Transverse colon (tissue), 4 donors: ENCODE measurements at regions of chr5 and their contacts with region 1.

Region 1: GRCh38 chr5:83430130-83431010 is 41.2 kb upstream of the VCAN start:
- DNase-seq: peak; percentile 53
- H3K4me3 ChIP-seq: no peak overlapping the region
- H3K27ac ChIP-seq: no peak overlapping the region
- H3K4me1 ChIP-seq: no peaks in the 10 kb centered on the region
- H3K27me3 ChIP-seq: no peaks in the 10 kb centered on the region
- CTCF ChIP-seq: peak; percentile 68 to 79 (median 73)
- EP300 ChIP-seq: no peak
- POLR2A ChIP-seq: no peak

Region 2: GRCh38 chr5:82351754-82352145 is 1078.6 kb before region 1 on chr5:
- in situ Hi-C with region 1: loop called in 3 of 4 experiments (anchors 5 to 25 kb)
- intact Hi-C with region 1: no loop called
- DNase-seq: no peak
- H3K4me3 ChIP-seq: no peak overlapping the region
- H3K27ac ChIP-seq: peak overlapping the region in 1 of 4 donors; percentile 10
- H3K4me1 ChIP-seq: no peaks in the 10 kb centered on the region
- H3K27me3 ChIP-seq: no peaks in the 10 kb centered on the region
- CTCF ChIP-seq: peak; percentile 70 to 85 (median 77)
- EP300 ChIP-seq: no peak
- POLR2A ChIP-seq: no peak

Region 3: DNA sequence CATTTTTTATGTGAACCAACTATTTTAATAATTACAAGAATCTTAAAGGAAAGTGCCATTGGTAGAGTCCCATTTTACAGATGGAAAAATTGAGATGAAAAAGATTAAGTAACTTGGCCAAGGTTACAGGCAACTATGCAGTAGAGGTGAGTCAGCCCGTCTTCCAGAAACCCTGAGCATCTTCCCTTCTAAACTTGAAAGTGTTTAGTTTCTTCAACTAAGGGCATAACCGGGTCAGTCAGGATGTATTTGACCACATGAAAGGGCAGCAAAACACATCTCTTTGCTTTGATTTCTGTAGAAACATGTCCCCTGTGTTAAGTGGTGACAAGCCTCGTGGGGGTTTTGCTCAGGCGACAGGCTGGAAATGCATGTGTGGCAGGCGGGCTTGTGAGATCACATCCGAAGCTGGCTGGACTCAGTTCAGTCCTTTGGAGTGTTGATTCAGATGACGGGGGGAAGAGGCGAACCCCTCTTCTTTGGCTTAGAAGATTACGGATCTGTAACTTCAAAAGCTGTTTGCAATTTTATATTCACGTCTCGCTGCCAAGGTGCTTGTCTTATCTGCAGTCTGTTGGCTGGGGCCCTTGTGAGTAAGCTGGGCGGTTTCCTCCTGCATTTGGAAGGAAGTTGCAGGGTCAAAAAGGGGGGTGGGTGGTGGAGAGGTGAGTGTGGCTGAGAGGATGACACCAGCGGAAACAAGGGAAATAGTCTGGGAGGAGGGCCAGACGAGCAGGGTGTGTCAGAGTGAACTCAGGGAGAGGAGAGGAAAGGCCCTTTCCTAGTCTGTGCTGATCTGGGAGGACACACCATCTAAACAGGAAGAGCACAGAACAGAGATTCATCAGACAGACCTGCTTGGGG is 1073.3 kb before region 1 on chr5:
- in situ Hi-C with region 1: loop called in 3 of 4 experiments (anchors 5 to 25 kb)
- intact Hi-C with region 1: no loop called
- DNase-seq: peak; percentile 64
- H3K4me3 ChIP-seq: no peak overlapping the region
- H3K27ac ChIP-seq: peak overlapping the region in 2 of 4 donors; percentile 23 to 34
- H3K4me1 ChIP-seq: peaks cover 0 to 11% (median 5%) of the 10 kb centered on the region in 4 donors
- H3K27me3 ChIP-seq: no peaks in the 10 kb centered on the region
- CTCF ChIP-seq: no peak
- EP300 ChIP-seq: no peak
- POLR2A ChIP-seq: no peak

Region 4: DNA sequence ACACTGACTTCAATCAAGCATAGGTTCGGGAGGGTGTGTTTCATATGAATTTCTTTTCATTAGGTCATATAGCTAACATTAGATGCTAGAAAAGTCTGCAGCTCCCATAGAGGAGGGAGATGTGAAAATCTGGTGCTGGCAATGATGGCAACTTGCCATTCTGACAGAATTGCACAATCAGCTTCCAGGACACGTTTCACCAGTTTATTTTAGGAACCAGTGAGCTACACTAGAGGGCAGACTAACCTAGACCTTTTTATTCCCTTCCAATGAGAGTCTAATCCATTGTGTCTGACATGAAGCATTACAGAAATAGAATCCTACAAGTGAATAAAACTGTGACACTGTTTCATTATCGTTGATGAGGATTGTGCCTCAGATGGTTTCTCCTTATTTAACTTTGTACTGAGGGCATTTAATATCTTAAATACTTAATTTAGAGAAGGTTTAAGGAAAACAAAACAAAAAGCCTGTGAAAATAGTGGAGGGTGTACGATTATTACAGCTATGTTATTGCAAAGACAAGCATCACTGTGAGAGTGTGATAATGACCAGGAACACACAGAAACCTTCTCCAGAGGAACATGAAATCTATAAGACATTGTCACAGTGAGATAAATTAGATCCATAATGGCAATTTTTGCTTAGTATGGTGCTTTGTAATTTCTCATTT is 788.9 kb before region 1 on chr5:
- in situ Hi-C with region 1: loop called in 2 of 4 experiments (anchors 25 kb)
- intact Hi-C with region 1: no loop called
- DNase-seq: peak; percentile 74
- H3K4me3 ChIP-seq: no peak overlapping the region
- H3K27ac ChIP-seq: no peak overlapping the region
- H3K4me1 ChIP-seq: peaks cover 3 to 18% (median 8%) of the 10 kb centered on the region in 4 donors
- H3K27me3 ChIP-seq: no peaks in the 10 kb centered on the region
- CTCF ChIP-seq: peak; percentile 57 to 82 (median 66)
- EP300 ChIP-seq: no peak
- POLR2A ChIP-seq: no peak

Region 5: DNA sequence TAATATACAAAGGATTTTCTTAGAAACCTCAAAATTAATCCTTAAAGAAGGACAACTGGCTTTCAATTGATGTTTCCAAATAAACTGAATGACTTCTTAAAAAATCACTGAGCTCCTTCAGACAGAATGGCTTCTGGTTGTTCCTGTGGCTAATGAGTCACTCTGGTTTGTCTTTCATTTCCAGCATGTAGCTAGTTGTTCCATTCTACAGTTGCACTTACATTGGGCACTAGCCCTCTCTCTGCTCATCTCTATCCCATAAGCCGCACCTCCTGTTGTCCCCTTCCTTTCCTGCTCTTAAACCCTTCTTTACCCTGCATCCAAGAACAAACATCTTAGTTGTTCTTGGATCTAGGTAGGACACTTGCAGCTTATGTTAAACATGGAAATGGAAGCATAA is 525.5 kb after region 1 on chr5:
- in situ Hi-C with region 1: no loop called
- intact Hi-C with region 1: no loop called
- DNase-seq: no peak
- H3K4me3 ChIP-seq: no peak overlapping the region
- H3K27ac ChIP-seq: no peak overlapping the region
- H3K4me1 ChIP-seq: no peaks in the 10 kb centered on the region
- H3K27me3 ChIP-seq: no peaks in the 10 kb centered on the region
- CTCF ChIP-seq: no peak
- EP300 ChIP-seq: no peak
- POLR2A ChIP-seq: no peak